Dendritic cell treated with granulocyte-macrophage colony-stimulating factor and Interleukin-4, amounts not matched to agents 40 ng/mL and 50 ng/mL, for 4 days (primary cell): ENCODE measurements at regions of chr5 and their contacts with region 1.

Region 1: DNA sequence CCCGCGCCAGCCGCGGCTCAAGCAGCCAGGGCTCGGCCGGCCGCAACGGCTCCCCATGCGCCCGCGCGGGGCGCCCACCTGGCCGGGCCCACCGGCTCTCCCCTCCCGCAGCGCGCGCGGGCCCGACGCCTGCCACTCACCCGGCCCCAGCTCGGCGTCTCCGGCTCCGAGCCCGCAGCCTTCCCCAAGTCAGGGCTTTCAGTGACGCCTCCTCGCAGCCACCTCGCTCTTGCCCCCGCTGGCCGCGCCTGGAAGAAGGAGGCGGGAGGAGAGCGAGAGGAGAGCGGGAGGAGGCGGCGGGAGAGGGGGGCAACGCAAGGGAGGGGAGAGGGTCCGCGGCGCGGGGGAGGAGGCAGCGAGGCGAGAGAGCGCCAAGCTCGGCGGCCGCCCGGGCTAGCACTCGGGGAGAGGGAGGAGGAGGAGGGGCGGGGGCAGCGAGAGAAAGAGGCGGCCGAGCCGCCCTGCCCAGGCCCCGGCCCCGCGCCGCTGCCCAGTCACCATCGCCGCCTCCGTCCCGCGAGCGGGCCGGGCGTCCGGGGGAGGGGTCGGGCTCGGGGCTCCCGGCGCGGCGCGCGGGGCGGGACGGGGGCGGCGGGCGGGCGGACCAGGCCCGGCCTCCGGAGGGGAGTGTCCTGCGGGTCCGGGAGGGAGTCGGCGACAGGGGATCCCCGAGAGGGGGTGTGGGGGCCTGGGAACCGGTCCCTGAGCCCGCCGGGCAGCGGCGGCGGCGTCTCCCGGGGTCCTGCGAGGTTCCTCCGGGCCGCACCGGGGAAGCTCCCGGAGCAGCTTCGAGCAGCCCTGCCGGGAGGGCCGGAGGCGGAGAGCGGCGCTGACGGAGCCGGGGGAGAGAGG is at the start of gene LHFPL2:
- H3K4me3 Mint-ChIP-seq: peak within 1 kb of the TSS; percentile 87
- H3K27ac Mint-ChIP-seq: peak within 1 kb of the TSS; percentile 70
- H3K4me1 Mint-ChIP-seq: peaks cover 37% of the 10 kb centered on the region
- H3K27me3 Mint-ChIP-seq: peaks cover 28% of the 10 kb centered on the region

Region 2: GRCh38 chr5:76901522-76901921 is 1747.1 kb before region 1 on chr5:
- intact Hi-C with region 1: no loop called
- H3K4me3 Mint-ChIP-seq: no peak overlapping the region
- H3K27ac Mint-ChIP-seq: no peak overlapping the region
- H3K4me1 Mint-ChIP-seq: no peaks in the 10 kb centered on the region
- H3K27me3 Mint-ChIP-seq: no peaks in the 10 kb centered on the region

Region 3: GRCh38 chr5:78544561-78545201 is 103.9 kb before region 1 on chr5:
- intact Hi-C with region 1: loop called (anchors 5 kb)
- H3K4me3 Mint-ChIP-seq: no peak overlapping the region
- H3K27ac Mint-ChIP-seq: peak overlapping the region; percentile 99
- H3K4me1 Mint-ChIP-seq: peaks cover 97% of the 10 kb centered on the region
- H3K27me3 Mint-ChIP-seq: no peaks in the 10 kb centered on the region

Region 4: DNA sequence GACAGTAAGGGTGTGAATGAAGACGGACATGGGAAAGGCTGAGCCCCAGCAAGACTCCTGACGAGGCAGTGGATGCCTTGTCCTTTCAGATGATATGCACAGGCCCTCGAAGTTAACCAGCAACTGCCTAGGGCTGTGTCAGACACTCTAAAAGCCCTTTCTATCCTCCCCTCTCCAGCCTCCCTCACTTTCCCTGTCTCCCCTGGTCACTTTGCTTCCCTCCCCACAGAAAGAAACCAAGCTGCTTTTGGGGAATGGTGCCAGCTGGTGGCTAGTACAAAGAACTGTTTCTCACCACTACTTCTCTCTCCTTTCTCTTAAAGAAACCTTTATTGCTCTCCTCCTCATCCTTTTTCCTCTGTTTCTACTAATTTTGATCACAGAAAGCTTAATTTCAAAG is 21.4 kb before region 1 on chr5:
- intact Hi-C with region 1: no loop called
- H3K4me3 Mint-ChIP-seq: no peak overlapping the region
- H3K27ac Mint-ChIP-seq: no peak overlapping the region
- H3K4me1 Mint-ChIP-seq: peaks cover 29% of the 10 kb centered on the region
- H3K27me3 Mint-ChIP-seq: peaks cover 2% of the 10 kb centered on the region

Region 5: GRCh38 chr5:78886341-78887230 is 238.0 kb after region 1 on chr5:
- intact Hi-C with region 1: loop called (anchors 10 kb)
- H3K4me3 Mint-ChIP-seq: no peak overlapping the region
- H3K27ac Mint-ChIP-seq: no peak overlapping the region
- H3K4me1 Mint-ChIP-seq: peaks cover 37% of the 10 kb centered on the region
- H3K27me3 Mint-ChIP-seq: no peaks in the 10 kb centered on the region